Spleen (tissue), 13 donors: ENCODE measurements at regions of chr18 and their contacts with region 1.

Region 1: DNA sequence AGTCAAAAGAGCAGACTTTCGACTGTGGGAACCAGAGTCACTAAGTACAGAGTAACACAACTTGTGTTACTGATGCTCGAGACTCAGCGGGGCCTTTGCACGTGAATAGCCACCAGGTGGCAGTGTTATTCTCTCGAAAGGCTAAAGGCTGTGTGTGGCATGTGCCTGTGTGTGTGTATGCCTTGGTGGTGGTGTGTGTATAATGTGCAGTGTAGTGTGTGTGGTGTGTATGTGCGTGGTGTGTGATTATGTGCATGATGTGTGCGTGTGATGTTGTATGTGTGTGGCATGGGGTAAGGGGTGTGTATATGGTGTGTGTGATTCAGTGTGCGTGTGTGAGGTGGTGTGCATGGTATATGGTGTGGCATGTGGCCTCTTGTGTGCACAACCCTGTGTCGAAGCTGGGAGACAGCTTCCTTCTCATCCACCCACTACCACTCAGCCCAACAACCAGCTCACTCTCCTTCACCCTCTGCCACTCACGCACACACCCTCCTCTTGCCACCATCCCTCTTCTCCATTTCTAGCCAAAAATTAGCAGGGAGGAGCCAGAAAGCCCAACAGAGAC is 83.0 kb upstream of the ZNF532 start:
- DNase-seq: peak; percentile 85
- H3K4me3 ChIP-seq: no peak overlapping the region
- H3K27ac ChIP-seq: peak overlapping the region in 3 of 8 donors; percentile 2 to 33 (median 26)
- H3K4me1 ChIP-seq: peaks cover 0 to 6% (median 1%) of the 10 kb centered on the region in 6 donors
- H3K27me3 ChIP-seq: peaks cover 0 to 18% (median 0%) of the 10 kb centered on the region in 7 donors
- CTCF ChIP-seq: peak; percentile 75 to 99 (median 92)
- POLR2A ChIP-seq: no peak

Region 2: GRCh38 chr18:58896268-58896667 is 114.6 kb after region 1 on chr18:
- intact Hi-C with region 1: loop called (anchors 10 kb)
- DNase-seq: no peak
- H3K4me3 ChIP-seq: peak overlapping the region in 2 of 8 donors; percentile 16 to 51
- H3K27ac ChIP-seq: peak overlapping the region in 7 of 8 donors; percentile 35 to 63 (median 57)
- H3K4me1 ChIP-seq: peaks cover 13 to 78% (median 47%) of the 10 kb centered on the region in 6 donors
- H3K27me3 ChIP-seq: no peaks in the 10 kb centered on the region
- CTCF ChIP-seq: no peak
- POLR2A ChIP-seq: no peak

Region 3: GRCh38 chr18:58953627-58954026 is 171.9 kb after region 1 on chr18:
- intact Hi-C with region 1: no loop called
- DNase-seq: no peak
- H3K4me3 ChIP-seq: no peak overlapping the region
- H3K27ac ChIP-seq: peak overlapping the region in 1 of 8 donors; percentile 24
- H3K4me1 ChIP-seq: peaks cover 0 to 8% (median 6%) of the 10 kb centered on the region in 6 donors
- H3K27me3 ChIP-seq: no peaks in the 10 kb centered on the region
- CTCF ChIP-seq: no peak
- POLR2A ChIP-seq: no peak

Region 4: DNA sequence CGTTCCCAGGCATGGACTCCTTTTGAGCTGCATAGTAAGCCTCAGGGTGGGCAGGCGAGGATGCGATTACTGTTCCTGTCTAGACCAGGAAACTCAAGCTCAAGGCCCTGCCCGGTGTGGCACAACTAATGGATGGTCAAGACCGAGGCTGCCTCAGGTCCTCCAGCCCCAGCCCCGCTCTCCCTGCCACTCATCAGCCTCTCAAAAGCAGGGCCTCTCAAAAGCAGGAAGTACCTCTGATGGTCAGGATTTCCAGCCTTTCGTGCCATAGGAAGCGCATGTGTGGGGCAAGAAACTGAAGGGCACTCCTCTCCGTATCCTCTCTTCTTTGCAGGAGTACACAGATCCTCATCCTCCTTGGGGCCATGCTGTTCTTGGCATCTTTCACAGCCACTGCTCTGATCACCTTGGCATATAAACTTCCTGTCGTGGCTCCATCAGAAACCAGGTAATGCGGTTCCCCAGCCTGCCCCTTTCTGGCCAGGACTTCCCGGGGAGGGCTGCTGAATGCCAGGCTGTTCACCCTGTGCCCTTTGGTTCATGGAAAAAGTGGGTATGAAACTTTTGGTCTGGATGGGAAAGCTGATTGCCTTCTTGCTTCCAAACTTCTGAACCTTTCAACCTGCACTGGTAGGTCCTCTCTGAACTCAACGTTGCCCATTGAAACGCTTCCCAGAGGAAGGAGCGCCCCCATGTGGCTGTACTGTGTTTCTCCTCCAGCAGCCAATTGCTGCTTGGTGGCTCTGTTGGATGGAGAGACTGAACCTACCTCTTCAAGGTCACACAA is 275.2 kb after region 1 on chr18:
- intact Hi-C with region 1: loop called (anchors 5 kb)
- DNase-seq: peak; percentile 90
- H3K4me3 ChIP-seq: no peak overlapping the region
- H3K27ac ChIP-seq: peak overlapping the region in 1 of 8 donors; percentile 5
- H3K4me1 ChIP-seq: peaks cover 0 to 13% (median 7%) of the 10 kb centered on the region in 6 donors
- H3K27me3 ChIP-seq: peaks cover 0 to under 1% (median 0%) of the 10 kb centered on the region in 7 donors
- CTCF ChIP-seq: peak in 10 of 11 experiments; percentile 55 to 91 (median 84)
- POLR2A ChIP-seq: no peak

Region 5: DNA sequence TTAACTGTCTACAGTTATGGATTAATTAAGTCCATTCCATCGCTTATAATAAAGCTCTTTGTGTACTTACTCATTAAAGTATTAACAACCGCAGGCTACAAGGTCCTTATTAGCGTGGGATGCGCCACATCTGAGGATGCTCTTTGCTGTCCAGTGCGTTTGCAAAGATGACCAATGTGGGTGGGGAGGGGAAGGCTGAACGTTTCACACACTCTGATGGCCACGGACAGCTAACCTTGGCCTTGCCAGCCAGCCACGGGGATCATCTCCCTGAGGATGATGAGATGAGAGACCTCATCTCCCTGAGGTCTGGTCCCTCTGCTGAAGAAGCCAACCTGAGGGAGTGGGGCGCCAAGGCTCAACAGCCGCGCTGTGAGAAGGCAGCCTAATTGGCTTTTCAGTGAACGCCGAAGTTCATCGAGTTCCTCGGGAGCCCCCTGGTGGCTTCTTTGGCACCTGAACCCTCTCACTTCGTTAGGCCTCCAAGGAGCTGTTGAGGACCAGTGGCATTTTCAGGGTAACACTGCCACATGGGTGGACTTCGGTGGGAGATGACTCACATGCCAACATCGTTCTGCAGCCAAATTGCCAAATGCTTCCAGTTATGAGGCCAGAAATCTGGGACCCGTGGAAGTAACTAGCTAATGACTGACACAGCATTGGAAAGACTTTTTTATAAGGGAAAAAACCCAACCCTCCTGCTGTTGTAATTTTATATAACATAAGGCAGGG is 288.6 kb after region 1 on chr18:
- intact Hi-C with region 1: loop called (anchors 5 kb)
- DNase-seq: peak; percentile 91
- H3K4me3 ChIP-seq: no peak overlapping the region
- H3K27ac ChIP-seq: no peak overlapping the region
- H3K4me1 ChIP-seq: peaks cover 0 to 16% (median 6%) of the 10 kb centered on the region in 6 donors
- H3K27me3 ChIP-seq: peaks cover 0 to 4% (median 0%) of the 10 kb centered on the region in 7 donors
- CTCF ChIP-seq: peak; percentile 61 to 93 (median 77)
- POLR2A ChIP-seq: no peak